Endothelial cell of umbilical vein (primary cell): ENCODE measurements at regions of chr2 and their contacts with region 1.

Region 1: DNA sequence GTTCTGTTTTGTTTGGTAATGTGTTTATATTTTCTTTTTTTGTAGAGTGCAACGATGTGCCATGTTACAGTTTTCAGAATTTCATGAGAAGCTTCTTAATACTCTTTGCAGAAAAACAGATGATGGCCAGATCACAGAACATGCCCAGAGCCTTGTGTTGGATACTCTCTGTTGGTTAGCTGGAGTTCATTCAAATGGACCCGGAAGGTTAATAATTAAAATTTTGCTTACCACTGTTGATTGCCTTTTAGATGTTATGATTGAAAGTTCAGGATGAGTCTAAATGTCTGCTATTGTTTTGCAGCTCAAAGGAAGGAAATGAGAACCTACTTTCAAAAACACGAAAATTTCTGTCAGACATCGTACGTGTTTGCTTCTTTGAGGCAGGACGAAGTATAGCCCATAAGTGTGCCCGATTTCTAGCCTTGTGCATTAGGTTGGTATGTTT is 85.2 kb downstream of the BIRC6 start:
- DNase-seq: peak; percentile 5
- H3K4me3 ChIP-seq: no peak overlapping the region
- H3K27ac ChIP-seq: no peak overlapping the region
- H3K4me1 ChIP-seq: no peaks in the 10 kb centered on the region
- H3K27me3 ChIP-seq: no peaks in the 10 kb centered on the region
- CTCF ChIP-seq: no peak
- POLR2A ChIP-seq: no peak

Region 2: DNA sequence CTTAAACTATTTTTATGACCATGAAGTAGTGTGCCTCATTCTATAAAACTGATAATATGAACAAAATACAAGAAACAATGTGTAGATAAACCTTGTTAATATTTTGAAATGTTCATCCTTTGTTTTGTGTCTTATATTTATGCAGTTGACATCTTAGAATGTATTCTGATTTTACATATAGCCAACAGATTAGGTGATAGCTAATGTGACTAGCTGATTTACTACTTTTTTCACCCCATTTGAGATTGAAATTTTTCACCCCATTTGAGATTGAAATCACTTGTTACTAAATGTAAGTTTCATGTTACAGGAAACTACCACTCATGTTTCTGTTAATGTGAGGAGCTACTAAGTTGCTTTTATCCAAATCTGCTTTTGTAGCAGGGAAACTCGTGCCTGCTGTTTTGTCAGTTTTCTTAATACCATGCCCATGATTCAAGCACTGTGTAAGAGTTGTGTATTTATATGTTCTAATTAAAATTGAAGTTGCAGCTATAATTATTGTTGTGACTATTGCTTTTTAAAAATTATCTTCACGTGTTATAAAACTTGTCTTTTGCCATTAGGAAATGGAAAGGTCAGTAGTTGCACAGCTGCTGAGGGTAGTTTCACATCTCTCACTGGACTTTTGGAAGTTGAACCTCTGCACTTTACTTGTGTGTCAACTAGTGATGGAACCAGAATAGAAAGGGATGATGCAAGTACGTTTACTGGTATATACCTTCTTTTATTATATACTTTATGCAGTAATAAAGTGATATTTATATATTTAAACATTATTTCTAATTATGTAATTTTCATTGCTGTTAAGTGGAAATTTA is 11.4 kb after region 1 on chr2:
- CTCF ChIA-PET with region 1: interaction called, 12 read pairs
- POLR2A ChIA-PET with region 1: no interaction called
- dilution Hi-C with region 1: no loop called
- intact Hi-C with region 1: no loop called
- DNase-seq: peak; percentile 59
- H3K4me3 ChIP-seq: no peak overlapping the region
- H3K27ac ChIP-seq: no peak overlapping the region
- H3K4me1 ChIP-seq: peaks cover 6% of the 10 kb centered on the region
- H3K27me3 ChIP-seq: no peaks in the 10 kb centered on the region
- CTCF ChIP-seq: no peak
- POLR2A ChIP-seq: no peak

Region 3: DNA sequence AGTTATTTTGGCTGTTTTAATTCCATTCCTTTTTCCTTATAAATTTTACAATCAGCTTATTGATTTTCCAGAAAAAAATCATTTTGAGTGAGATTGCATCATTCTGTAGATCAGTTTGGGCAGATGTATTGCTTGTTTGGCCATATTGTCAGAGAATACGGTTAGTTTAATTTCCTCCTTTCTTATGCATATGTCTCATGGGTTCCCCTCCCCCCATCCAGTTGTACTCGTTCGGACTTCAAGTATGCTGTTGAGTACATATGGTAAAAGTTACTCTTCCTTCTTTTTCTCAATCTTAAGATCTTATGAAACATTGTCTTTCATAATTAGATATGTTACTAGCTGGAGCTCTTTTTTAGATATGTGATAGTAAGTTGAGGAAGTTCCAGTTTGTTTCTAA is 54.6 kb after region 1 on chr2:
- CTCF ChIA-PET with region 1: no interaction called
- POLR2A ChIA-PET with region 1: no interaction called
- dilution Hi-C with region 1: no loop called
- intact Hi-C with region 1: no loop called
- DNase-seq: no peak
- H3K4me3 ChIP-seq: no peak overlapping the region
- H3K27ac ChIP-seq: no peak overlapping the region
- H3K4me1 ChIP-seq: no peaks in the 10 kb centered on the region
- H3K27me3 ChIP-seq: no peaks in the 10 kb centered on the region
- CTCF ChIP-seq: no peak
- POLR2A ChIP-seq: no peak